Activated T-helper 2 cell treated with anti-CD3 and anti-CD28 coated beads, Interferon-gamma antibody, Interleukin-2, Interleukin-4, amounts not matched to agents 10 μg/mL and 5 μg/mL and 100 μg/mL, durations not matched to agents 14 hours and 24 hours and 36 hours (primary cell): ENCODE measurements at regions of chr10 and their contacts with region 1.

Region 1: DNA sequence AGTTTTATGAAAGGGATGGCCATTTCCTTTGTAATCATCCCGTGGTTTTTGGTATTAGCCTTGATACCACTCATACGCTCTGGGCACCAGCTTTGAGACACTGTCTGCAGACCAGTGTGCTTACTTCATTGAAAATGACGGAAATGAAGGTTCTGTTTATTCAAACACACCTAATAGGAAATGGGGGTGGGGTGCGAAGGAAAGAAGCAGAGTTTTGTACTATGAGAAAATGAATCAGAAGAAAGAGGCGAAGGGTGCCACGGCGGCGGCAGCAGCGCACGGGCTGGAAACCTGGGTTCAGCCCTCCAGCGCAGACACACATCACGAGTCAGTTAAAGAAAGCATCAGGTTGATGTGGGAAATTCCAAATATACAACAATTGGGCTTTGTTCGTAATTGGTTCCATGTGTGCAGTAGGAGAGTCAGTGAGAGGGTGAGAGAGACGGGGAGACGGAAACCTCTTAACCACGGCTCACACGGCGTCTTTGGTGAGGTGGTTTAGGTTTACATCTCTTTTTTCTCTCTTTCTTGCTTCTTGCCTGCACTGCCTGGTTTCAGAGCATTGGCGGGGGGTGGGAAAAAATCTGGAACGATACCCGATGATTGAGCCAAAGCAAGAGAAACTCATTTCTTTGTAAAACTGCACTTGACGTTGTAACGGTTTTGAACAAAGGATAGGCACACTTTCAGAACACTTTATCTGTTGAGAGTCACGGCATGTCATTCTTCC is 321.2 kb downstream of the FRMD4A start:
- DNase-seq: peak; percentile 30
- H3K4me3 Mint-ChIP-seq: peak overlapping the region; percentile 74
- H3K27ac Mint-ChIP-seq: peak overlapping the region; percentile 75
- H3K4me1 Mint-ChIP-seq: peaks cover 29% of the 10 kb centered on the region
- H3K27me3 Mint-ChIP-seq: peaks cover 24% of the 10 kb centered on the region

Region 2: GRCh38 chr10:13891128-13892000 is 118.2 kb before region 1 on chr10:
- intact Hi-C with region 1: loop called (anchors 2 kb)
- DNase-seq: no peak
- H3K4me3 Mint-ChIP-seq: no peak overlapping the region
- H3K27ac Mint-ChIP-seq: no peak overlapping the region
- H3K4me1 Mint-ChIP-seq: peaks cover 2% of the 10 kb centered on the region
- H3K27me3 Mint-ChIP-seq: peaks cover 66% of the 10 kb centered on the region

Region 3: DNA sequence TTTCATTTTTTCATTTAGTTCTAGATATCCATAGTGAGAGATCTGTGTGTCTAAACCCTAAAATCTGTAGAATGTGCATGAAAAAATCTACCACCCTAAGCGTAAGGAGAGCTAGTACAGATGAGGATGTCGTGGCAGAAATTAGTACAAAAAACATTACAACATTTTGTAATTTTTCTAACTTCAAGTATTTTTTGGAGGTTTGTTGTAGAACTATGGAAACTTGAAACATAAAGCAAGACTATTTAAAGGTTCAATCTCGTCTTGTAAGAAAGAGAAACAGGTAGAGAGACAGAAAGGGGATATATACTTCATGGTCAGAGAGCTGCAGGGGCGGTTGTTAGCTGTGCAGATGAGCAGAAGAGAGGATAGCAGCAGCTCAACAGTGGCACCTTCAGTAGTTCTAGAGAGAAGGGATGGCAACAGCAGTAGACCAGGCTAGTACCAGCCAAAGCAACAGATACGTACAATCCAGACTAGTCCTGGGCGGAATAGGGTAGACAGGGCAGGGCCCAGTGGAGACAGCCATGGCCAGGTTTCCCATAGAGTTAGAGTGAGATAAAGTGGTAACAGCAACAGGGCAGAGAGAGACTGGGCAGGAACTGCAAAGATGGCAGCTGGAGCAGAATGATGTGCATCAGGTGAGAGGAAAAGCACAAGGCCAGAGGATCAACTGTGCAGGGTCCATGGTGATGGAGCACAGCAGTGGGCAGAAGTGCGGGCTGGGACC is 175.9 kb after region 1 on chr10:
- intact Hi-C with region 1: loop called (anchors 10 kb)
- DNase-seq: peak; percentile 49
- H3K4me3 Mint-ChIP-seq: peak overlapping the region; percentile 23
- H3K27ac Mint-ChIP-seq: peak overlapping the region; percentile 80
- H3K4me1 Mint-ChIP-seq: peaks cover 20% of the 10 kb centered on the region
- H3K27me3 Mint-ChIP-seq: peaks cover 49% of the 10 kb centered on the region